ENCODE measurements at regions of chr1 and their contacts with region 1.

Region 1: DNA sequence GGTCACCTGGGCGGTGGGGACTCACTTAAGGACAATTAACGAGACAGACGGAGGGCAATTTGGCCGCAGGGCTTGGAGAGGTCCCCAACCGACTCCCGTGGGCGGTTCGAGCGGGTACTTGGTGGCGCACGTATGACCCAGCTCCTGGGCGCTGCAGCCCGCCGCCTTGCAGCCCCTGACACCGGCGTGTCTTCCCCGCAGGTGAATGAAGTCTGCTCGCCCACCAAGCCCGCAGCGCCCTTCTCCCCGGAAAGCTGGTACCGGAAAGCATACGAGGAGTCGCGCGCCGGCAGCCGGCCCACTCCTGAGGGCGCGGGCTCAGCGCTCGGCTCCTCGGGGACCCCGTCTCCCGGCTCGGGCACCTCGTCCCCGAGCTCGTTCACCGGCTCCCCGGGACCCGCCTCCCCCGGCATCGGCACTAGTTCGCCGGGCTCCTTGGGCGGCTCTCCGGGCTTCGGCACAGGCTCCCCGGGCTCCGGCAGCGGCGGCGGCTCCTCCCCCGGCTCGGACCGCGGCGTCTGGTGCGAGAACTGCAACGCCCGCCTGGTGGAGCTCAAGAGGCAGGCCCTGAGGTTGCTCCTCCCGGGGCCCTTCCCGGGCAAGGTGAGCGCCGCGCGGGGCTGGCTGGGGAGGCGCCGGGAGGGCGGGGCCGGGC is 1.4 kb downstream of the KIF26B start:
- DNase-seq: peak; percentile 65
- ATAC-seq: peak; percentile 86
- H3K4me3 ChIP-seq: peak overlapping the region; percentile 86
- H3K27ac ChIP-seq: peak overlapping the region; percentile 4; the same call in 1 of the 2 replicates
- H3K4me1 ChIP-seq: no peaks in the 10 kb centered on the region
- H3K27me3 ChIP-seq: no peaks in the 10 kb centered on the region
- CTCF ChIP-seq: peak; percentile 77
- POLR2A ChIP-seq: no peak
- RAD21 ChIP-seq: peak; percentile 74

Region 2: DNA sequence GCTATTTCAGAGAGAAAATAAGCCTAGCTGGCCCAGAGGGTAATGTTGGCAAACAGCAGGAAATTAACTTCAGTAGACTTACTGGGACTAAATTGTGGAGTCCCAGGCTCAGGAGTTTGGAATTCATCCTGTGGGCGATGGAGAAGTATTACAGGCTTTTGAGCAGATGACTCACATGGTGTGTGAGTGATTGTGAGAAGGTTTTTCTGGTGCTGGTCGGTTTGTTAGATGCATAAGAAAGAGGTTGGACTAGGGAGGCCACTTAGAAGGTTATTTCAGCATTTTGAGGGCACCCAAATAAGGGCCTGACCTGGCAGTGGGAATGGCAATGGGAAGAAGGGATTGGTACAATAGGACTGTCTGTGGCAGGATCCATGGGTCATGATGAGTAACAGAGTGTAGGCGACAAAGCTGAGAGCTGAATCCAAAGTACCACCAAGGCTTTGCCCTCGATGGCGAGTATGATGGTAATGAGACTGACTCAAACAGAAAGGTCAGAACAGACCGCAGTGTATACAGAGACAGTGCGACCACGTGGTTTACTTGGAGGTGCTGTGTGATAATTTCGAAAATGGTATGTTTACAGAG is 70.6 kb before region 1 on chr1:
- CTCF ChIA-PET with region 1: interaction called, 8 read pairs
- POLR2A ChIA-PET with region 1: interaction called, 3 read pairs
- dilution Hi-C with region 1: no loop called
- in situ Hi-C with region 1: no loop called
- intact Hi-C with region 1: loop called (anchors 2 kb)
- DNase-seq: peak; percentile 97
- ATAC-seq: peak; percentile 91
- H3K4me3 ChIP-seq: no peak overlapping the region
- H3K27ac ChIP-seq: peak overlapping the region; percentile 85
- H3K4me1 ChIP-seq: peaks cover 12% of the 10 kb centered on the region
- H3K27me3 ChIP-seq: no peaks in the 10 kb centered on the region
- CTCF ChIP-seq: peak; percentile 11; the same call in 1 of the 2 replicates
- POLR2A ChIP-seq: no peak; the same call in 1 of the 2 replicates
- RAD21 ChIP-seq: no peak

Region 3: GRCh38 chr1:245411245-245412036 is 255.2 kb after region 1 on chr1:
- CTCF ChIA-PET with region 1: no interaction called
- POLR2A ChIA-PET with region 1: no interaction called
- dilution Hi-C with region 1: no loop called
- in situ Hi-C with region 1: no loop called
- intact Hi-C with region 1: no loop called
- DNase-seq: peak; percentile 75
- ATAC-seq: peak; percentile 98
- H3K4me3 ChIP-seq: no peak overlapping the region
- H3K27ac ChIP-seq: peak overlapping the region; percentile 52
- H3K4me1 ChIP-seq: peaks cover 6% of the 10 kb centered on the region
- H3K27me3 ChIP-seq: no peaks in the 10 kb centered on the region
- CTCF ChIP-seq: no peak
- POLR2A ChIP-seq: no peak
- RAD21 ChIP-seq: no peak

Region 4: DNA sequence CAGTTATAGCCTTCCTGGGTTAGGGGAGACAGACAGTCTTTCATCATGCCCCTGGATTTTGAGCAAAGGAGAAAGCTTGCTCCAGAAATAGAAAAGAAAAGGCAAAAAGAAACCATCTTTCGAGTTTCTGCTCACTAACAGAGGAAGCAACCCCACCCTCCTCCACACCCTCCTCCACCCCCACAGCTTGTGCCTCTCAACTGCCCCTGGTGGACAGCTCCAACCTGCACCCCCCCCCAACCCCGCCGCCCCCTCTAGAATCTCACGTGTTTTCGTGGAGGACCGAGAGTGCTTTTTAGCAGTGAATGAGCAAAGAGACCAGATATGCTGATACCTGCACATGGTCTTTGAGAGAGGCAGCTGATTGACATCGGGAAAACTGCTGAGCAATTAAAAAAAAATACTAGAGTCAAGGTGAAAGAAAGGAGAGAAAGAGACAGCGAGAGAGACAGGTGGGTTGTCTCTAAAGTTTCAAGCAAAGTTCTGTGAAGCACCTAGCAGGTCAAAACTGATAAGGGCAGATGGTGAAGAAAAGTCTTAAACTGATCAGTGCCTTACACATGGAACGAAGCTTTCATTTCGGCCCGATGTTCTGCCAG is 356.9 kb after region 1 on chr1:
- CTCF ChIA-PET with region 1: interaction called, 3 read pairs
- POLR2A ChIA-PET with region 1: no interaction called
- dilution Hi-C with region 1: no loop called
- in situ Hi-C with region 1: no loop called
- intact Hi-C with region 1: loop called (anchors 1 kb)
- DNase-seq: no peak
- ATAC-seq: no peak
- H3K4me3 ChIP-seq: no peak overlapping the region
- H3K27ac ChIP-seq: no peak overlapping the region
- H3K4me1 ChIP-seq: peaks cover 2% of the 10 kb centered on the region; the same call in 1 of the 2 replicates
- H3K27me3 ChIP-seq: no peaks in the 10 kb centered on the region
- CTCF ChIP-seq: no peak
- POLR2A ChIP-seq: no peak
- RAD21 ChIP-seq: no peak

Region 5: DNA sequence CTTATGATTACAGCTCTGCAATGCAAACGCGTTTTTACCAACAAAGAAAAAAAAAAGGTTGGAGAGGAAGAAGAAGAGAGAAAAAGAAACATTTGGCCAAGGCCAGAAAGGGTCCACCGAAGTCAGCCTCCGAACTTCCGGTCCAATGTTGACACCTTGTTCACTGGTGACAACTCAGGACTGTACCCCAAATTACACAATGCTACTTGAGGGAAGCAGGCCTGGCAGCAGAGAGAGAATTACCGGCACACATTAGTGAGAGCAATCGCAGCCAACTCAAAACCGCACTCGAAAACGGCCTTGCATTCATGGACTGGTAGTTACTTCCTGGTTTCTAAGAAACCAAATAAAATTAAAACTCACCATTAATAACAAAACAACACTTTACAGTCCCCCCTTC is 651.1 kb after region 1 on chr1:
- CTCF ChIA-PET with region 1: no interaction called
- POLR2A ChIA-PET with region 1: no interaction called
- dilution Hi-C with region 1: no loop called
- in situ Hi-C with region 1: no loop called
- intact Hi-C with region 1: loop called (anchors 10 kb)
- DNase-seq: no peak
- ATAC-seq: no peak
- H3K4me3 ChIP-seq: no peak overlapping the region
- H3K27ac ChIP-seq: no peak overlapping the region
- H3K4me1 ChIP-seq: peaks cover 3% of the 10 kb centered on the region
- H3K27me3 ChIP-seq: no peaks in the 10 kb centered on the region
- CTCF ChIP-seq: no peak
- POLR2A ChIP-seq: no peak
- RAD21 ChIP-seq: no peak

Region 6: DNA sequence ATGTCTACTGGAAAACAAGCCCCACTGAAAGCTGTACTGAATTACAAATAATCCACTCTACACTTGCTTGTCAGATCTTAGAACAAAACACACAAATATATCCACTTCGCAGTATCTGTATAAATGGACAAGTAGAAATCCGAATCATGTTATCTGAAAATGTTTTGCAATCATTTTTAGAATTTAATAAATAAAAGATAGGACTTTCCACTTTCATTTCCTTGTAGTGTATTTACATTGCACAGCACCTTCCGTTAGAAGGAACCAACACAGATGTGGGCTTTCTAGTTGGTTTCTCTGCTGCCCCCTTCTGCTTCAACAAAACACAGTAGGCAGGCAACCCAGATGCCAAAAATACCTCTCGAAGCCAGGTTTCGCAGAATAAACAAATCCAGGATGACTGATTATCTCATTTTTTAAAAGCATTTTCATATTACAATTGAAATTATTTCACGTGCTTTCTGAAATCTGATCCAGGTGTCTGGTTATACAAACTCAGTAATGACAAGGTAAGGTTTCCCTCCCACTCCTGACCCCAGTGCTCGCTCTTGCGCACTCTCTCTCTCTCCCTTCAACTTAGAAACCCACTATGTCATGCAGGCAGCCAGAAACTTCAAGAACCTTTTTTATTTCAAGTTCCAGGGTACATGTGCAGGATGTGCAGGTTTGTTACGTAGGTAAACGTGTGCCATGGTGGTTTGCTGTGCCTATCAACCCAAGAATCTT is 961.0 kb after region 1 on chr1:
- CTCF ChIA-PET with region 1: no interaction called
- POLR2A ChIA-PET with region 1: no interaction called
- dilution Hi-C with region 1: no loop called
- in situ Hi-C with region 1: no loop called
- intact Hi-C with region 1: loop called (anchors 1 kb)
- DNase-seq: peak; percentile 64
- ATAC-seq: peak; percentile 72
- H3K4me3 ChIP-seq: no peak overlapping the region
- H3K27ac ChIP-seq: no peak overlapping the region
- H3K4me1 ChIP-seq: no peaks in the 10 kb centered on the region
- H3K27me3 ChIP-seq: no peaks in the 10 kb centered on the region
- CTCF ChIP-seq: peak; percentile 55
- POLR2A ChIP-seq: no peak
- RAD21 ChIP-seq: peak; percentile 52

Region 7: GRCh38 chr1:246497331-246497915 is 1341.2 kb after region 1 on chr1:
- CTCF ChIA-PET with region 1: interaction called, 6 read pairs
- POLR2A ChIA-PET with region 1: no interaction called
- dilution Hi-C with region 1: no loop called
- in situ Hi-C with region 1: loop called (anchors 5 kb)
- intact Hi-C with region 1: loop called (anchors 1 kb)
- DNase-seq: peak; percentile 79
- ATAC-seq: peak; percentile 57
- H3K4me3 ChIP-seq: no peak overlapping the region
- H3K27ac ChIP-seq: no peak overlapping the region
- H3K4me1 ChIP-seq: peaks cover 6% of the 10 kb centered on the region
- H3K27me3 ChIP-seq: no peaks in the 10 kb centered on the region
- CTCF ChIP-seq: peak; percentile 82
- POLR2A ChIP-seq: no peak
- RAD21 ChIP-seq: peak; percentile 62

Measured in IMR-90 (cell line).